RWPE1 (cell line): ENCODE measurements at regions of chr5 and their contacts with region 1.

Region 1: GRCh38 chr5:177403792-177404640 is 3.6 kb upstream of the PFN3 start:
- DNase-seq: peak; percentile 89
- H3K27ac ChIP-seq: peak overlapping the region; percentile 78
- CTCF ChIP-seq: peak; percentile 79

Region 2: DNA sequence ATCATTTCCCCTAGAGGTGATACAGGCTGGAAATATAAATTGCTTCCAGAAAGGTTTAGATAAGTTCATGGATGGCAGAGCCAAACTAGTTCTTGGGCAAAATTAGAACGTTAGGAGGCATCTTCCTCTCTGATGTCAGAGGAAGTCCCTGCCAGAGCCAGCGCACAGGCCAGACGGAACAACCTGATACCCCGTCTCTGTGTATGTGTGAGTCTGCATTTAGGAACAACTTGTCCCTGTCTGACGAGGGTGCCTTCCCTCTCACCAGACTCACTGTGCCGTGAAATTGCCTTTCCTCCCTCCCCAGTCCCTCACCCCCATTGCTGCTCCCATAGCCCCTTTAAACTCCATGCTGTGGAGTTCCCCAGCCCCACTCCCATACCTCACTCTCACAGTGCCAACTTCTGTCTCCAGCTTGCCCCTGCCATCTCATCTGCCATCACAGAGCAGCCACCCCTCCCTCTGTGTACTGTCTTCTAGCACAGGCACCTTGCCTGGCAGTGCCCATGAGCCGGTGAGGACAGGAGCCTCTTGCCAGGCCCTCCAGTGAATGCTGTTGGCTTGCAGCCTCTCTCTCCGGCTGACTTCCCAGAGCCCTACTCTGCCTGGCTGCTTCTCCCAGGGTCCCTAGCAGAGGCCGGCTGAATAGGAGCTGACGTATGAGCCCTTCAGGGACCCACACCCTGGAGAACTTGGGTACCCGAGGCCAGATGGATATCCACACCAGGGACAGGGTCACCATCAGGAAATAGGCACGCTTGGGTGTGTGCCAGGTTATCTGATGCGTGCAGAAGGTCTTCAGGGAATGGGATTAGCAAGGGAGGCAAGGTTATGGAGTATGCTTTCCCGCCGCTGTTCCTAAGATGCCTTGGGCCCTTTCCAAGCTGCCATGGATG is 567.0 kb before region 1 on chr5:
- CTCF ChIA-PET with region 1: no interaction called
- POLR2A ChIA-PET with region 1: no interaction called
- DNase-seq: no peak
- H3K27ac ChIP-seq: no peak overlapping the region
- CTCF ChIP-seq: no peak

Region 3: DNA sequence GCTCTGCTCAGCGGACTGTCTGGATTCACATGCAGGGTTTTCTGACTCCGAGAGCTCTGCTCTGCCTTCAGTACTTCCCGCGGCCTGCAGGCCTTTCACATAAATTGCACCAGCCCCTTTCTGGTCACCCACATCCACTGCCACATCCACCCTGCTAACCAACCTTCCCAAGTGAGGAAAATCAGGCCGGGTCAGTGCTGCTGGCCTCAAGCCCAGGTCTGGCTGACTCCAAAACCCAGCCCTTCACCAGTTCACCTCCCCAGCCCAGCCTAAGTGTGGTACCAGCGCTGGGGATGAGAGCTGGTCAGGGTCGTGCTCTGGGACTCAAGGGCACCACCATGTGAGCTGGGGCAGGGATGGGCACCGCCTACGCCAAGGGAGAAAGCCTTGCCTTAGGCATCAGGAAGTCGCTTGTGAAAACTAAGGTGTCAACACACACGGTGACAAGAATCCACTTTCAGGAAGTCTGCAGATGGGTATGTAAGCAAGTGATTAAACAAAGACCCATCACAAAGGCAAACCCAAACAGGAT is 64.8 kb before region 1 on chr5:
- CTCF ChIA-PET with region 1: interaction called, 10 read pairs
- POLR2A ChIA-PET with region 1: no interaction called
- DNase-seq: no peak
- H3K27ac ChIP-seq: peak overlapping the region; percentile 14; the same call in 1 of the 2 replicates
- CTCF ChIP-seq: no peak

Region 4: GRCh38 chr5:177370488-177371119 is 33.4 kb before region 1 on chr5:
- CTCF ChIA-PET with region 1: interaction called, 76 read pairs
- POLR2A ChIA-PET with region 1: interaction called, 3 read pairs
- DNase-seq: peak; percentile 96
- H3K27ac ChIP-seq: peak overlapping the region; percentile 89
- CTCF ChIP-seq: peak; percentile 87

Region 5: GRCh38 chr5:177390363-177391300 is 13.4 kb before region 1 on chr5:
- CTCF ChIA-PET with region 1: interaction called, 162 read pairs
- POLR2A ChIA-PET with region 1: interaction called, 7 read pairs
- DNase-seq: peak; percentile 94
- H3K27ac ChIP-seq: peak overlapping the region; percentile 99
- CTCF ChIP-seq: peak; percentile 98

Region 6: GRCh38 chr5:177425801-177426565 is 22.0 kb after region 1 on chr5:
- CTCF ChIA-PET with region 1: interaction called, 100 read pairs
- POLR2A ChIA-PET with region 1: interaction called, 4 read pairs
- DNase-seq: peak; percentile 100
- H3K27ac ChIP-seq: peak overlapping the region; percentile 94
- CTCF ChIP-seq: no peak

Region 7: DNA sequence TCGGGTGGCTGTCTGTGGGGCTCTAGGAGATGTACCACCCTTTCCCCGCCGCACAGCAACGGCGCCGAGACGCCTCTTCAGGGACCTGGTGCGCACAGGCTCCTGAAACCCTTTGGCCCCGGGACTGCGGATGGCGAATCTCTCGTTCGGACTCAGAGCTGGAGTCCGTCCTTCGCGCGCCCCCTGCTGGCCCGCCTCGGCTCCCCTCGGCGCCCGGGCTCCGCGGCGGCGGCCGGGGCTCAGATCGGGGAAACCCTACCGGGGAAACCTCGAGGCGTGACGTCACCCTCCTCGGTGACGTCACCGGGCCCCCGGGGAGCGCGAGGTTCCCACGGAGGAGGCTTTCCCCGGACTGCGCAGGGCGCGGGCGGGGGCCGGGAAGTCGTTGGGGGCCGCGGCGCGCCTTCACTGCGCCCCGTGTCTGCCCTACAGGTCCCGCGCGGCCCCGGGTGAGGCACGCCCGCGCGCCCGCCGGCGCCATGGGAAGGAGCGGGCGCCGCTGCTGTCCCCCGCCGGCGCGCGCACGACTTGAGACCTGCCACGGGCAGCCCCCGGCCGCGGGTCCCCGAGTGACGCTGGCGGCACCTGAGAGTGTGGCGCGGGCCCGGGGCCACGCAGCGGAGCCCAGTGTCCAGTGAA is 50.5 kb after region 1 on chr5:
- CTCF ChIA-PET with region 1: interaction called, 210 read pairs
- POLR2A ChIA-PET with region 1: interaction called, 20 read pairs
- DNase-seq: peak; percentile 100
- H3K27ac ChIP-seq: peak overlapping the region; percentile 84
- CTCF ChIP-seq: peak; percentile 96